Calu3 (cell line): ENCODE measurements at regions of chr9 and their contacts with region 1.

Region 1: GRCh38 chr9:97398999-97399758 is 12.7 kb upstream of the TDRD7 start:
- DNase-seq: peak; percentile 83
- H3K4me3 Mint-ChIP-seq: no peak overlapping the region
- H3K27ac Mint-ChIP-seq: peak overlapping the region; percentile 34
- H3K4me1 Mint-ChIP-seq: peaks cover 10% of the 10 kb centered on the region
- H3K27me3 Mint-ChIP-seq: no peaks in the 10 kb centered on the region
- CTCF ChIP-seq: peak; percentile 86

Region 2: GRCh38 chr9:97386733-97387503 is 12.3 kb before region 1 on chr9:
- CTCF ChIA-PET with region 1: interaction called, 12 read pairs
- intact Hi-C with region 1: no loop called
- DNase-seq: peak; percentile 71
- H3K4me3 Mint-ChIP-seq: no peak overlapping the region
- H3K27ac Mint-ChIP-seq: no peak overlapping the region
- H3K4me1 Mint-ChIP-seq: peaks cover 39% of the 10 kb centered on the region
- H3K27me3 Mint-ChIP-seq: no peaks in the 10 kb centered on the region
- CTCF ChIP-seq: peak; percentile 94